Motor neuron (in vitro differentiated cells): ENCODE measurements at regions of chr11 and their contacts with region 1.

Region 1: GRCh38 chr11:47111318-47111804 is 65.3 kb downstream of the ARFGAP2 start:
- ATAC-seq: no peak
- H3K4me3 ChIP-seq: no peak overlapping the region
- H3K27ac ChIP-seq: no peak overlapping the region
- H3K4me1 ChIP-seq: peaks cover 6 to 7% of the 10 kb centered on the region in 2 donors

Region 2: DNA sequence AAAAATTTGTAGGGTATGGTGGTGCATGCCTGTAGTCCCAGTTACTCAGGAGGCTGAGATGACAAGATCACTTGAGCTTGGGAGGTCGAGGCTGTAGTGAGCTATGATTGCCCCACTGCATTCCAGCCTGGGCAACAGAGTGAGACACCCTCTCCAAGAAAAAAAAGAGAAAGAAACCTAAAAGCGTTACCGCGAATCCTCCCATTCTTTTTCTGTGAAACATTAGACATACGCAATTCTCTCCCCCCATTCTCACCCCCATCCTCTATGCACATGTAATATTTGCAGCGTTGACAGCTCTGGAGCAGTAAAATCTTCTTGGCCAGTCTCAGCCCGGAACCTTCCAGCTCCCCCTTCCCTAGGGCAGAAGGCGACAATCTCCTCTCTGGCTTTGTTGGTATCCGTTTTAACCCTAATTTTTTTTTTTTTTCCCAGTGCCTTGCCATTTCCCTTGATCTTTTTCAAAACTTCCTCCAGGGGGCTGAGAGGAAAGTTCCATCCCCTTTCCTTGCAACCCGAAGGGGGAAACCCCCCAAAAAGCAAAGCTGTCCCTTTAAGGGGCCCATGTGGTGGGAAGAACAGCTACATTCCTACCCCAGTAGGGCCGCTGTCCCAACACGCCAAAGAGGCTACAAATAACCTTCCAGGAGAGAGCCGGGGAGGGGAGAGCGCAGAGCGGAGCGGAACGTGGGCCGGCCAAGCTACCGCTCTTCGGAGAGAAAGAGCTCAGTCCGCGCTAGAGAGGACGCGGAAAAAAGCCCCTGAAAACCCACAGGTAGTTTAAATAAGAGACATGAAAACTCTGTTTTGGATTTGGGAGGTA is 194.9 kb before region 1 on chr11:
- in situ Hi-C with region 1: no loop called
- ATAC-seq: peak in 6 of 8 experiments; percentile 11 to 70 (median 36)
- H3K4me3 ChIP-seq: peak overlapping the region; percentile 28 to 48 (median 41)
- H3K27ac ChIP-seq: no peak overlapping the region
- H3K4me1 ChIP-seq: peaks cover 26 to 27% of the 10 kb centered on the region in 2 donors

Region 3: GRCh38 chr11:46972343-46972742 is 139.0 kb before region 1 on chr11:
- in situ Hi-C with region 1: loop called in 1 of 9 experiments (anchors 25 kb)
- ATAC-seq: no peak
- H3K4me3 ChIP-seq: no peak overlapping the region
- H3K27ac ChIP-seq: no peak overlapping the region
- H3K4me1 ChIP-seq: peaks cover 5 to 6% of the 10 kb centered on the region in 2 donors